HCT116 (cell line): ENCODE measurements at regions of chr7 and their contacts with region 1.

Region 1: GRCh38 chr7:143214789-143215679 is 6.8 kb upstream of the TAS2R40 start:
- DNase-seq: peak; percentile 87
- ATAC-seq: peak; percentile 98
- H3K4me3 ChIP-seq: no peak overlapping the region
- H3K27ac ChIP-seq: no peak overlapping the region
- H3K4me1 ChIP-seq: no peaks in the 10 kb centered on the region
- H3K27me3 ChIP-seq: no peaks in the 10 kb centered on the region
- CTCF ChIP-seq: peak; percentile 95 to 100 (median 100)
- POLR2A ChIP-seq: no peak
- RAD21 ChIP-seq: peak; percentile 100

Region 2: GRCh38 chr7:142603870-142604448 is 611.1 kb before region 1 on chr7:
- CTCF ChIA-PET with region 1: interaction called, 6 read pairs
- POLR2A ChIA-PET with region 1: no interaction called
- RAD21 ChIA-PET with region 1: no interaction called
- intact Hi-C with region 1: loop called (anchors 1 kb)
- DNase-seq: peak; percentile 53
- ATAC-seq: peak; percentile 81
- H3K4me3 ChIP-seq: no peak overlapping the region; a peak in 2 of 4 replicates
- H3K27ac ChIP-seq: no peak overlapping the region
- H3K4me1 ChIP-seq: peaks cover 0 to 7% of the 10 kb centered on the region in 2 experiments; a peak in 1 of 4 replicates
- H3K27me3 ChIP-seq: no peaks in the 10 kb centered on the region
- CTCF ChIP-seq: peak; percentile 78 to 92 (median 90)
- POLR2A ChIP-seq: no peak
- RAD21 ChIP-seq: peak; percentile 86

Region 3: DNA sequence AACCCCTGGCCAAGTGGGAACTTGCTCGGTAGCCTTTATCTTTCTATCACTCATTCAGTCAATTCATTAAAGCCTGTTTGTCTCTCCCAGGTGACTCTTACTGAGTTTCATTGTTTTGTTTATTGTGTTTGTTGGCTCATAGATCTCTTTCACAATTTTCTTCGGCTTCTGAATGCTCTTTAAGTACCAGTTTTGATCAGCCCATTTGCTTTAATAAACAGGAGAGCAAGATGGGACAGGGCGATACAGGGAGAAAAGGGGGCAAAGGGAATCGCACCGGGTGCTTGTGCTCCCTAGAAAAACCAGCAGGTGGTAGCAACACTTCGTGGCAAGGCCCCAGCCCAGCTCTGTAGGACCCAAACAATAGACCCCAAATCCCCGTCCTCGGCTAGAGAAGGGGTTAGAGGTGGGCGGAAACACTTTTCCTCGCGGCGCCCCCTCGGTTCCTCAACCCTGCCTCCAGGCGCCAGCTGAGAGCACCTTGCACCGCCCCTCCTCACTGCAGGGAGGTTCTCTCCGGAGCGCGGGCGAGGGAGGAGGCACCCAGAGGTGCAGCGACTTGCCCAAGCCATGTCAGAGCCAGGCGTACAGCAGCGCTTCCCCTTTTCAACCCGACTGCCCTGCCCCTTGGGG is 361.2 kb before region 1 on chr7:
- CTCF ChIA-PET with region 1: interaction called, 3 read pairs
- POLR2A ChIA-PET with region 1: no interaction called
- RAD21 ChIA-PET with region 1: no interaction called
- intact Hi-C with region 1: loop called (anchors 10 kb)
- DNase-seq: peak; percentile 35
- ATAC-seq: peak; percentile 77
- H3K4me3 ChIP-seq: peak overlapping the region; percentile 76
- H3K27ac ChIP-seq: peak overlapping the region; percentile 68; the same call in 1 of the 2 replicates
- H3K4me1 ChIP-seq: peaks cover 8 to 16% of the 10 kb centered on the region in 2 experiments; a peak in 3 of 4 replicates
- H3K27me3 ChIP-seq: no peaks in the 10 kb centered on the region
- CTCF ChIP-seq: peak; percentile 74 to 85 (median 79); a peak in 5 of 6 replicates
- POLR2A ChIP-seq: no peak
- RAD21 ChIP-seq: peak; percentile 84

Region 4: DNA sequence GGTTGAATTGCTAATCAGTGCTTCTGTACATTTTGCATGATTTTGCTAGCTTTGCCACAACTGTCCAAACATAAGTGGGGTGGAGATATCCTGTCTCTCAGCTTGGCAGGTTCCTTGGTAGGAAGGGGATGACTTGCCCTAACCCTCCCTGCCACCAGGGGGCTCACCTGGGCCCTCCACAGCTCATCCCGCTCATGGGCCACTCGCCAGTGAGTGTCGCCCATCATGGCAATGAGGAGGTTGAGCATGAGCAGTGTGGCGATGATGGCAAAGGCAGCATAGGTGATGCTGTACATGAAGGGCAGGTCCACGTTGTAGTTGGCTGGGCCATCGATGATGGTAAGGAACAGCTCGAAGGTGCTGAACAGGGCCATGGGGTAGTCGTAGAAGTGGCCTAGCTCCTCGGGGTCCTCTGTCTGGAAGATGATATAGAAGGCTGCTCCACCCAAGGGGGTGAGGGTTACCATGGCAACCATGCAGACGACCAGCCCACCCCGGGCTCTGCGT is 341.7 kb before region 1 on chr7:
- CTCF ChIA-PET with region 1: interaction called, 15 read pairs
- POLR2A ChIA-PET with region 1: no interaction called
- RAD21 ChIA-PET with region 1: interaction called in 1 of 2 experiments, 3 read pairs
- intact Hi-C with region 1: no loop called
- DNase-seq: peak; percentile 28
- ATAC-seq: peak; percentile 94
- H3K4me3 ChIP-seq: no peak overlapping the region
- H3K27ac ChIP-seq: no peak overlapping the region
- H3K4me1 ChIP-seq: no peaks in the 10 kb centered on the region
- H3K27me3 ChIP-seq: no peaks in the 10 kb centered on the region
- CTCF ChIP-seq: peak; percentile 76 to 93 (median 90)
- POLR2A ChIP-seq: no peak
- RAD21 ChIP-seq: peak; percentile 40; the same call in 1 of the 2 replicates

Region 5: GRCh38 chr7:142880876-142881505 is 334.0 kb before region 1 on chr7:
- CTCF ChIA-PET with region 1: interaction called, 3 read pairs
- POLR2A ChIA-PET with region 1: no interaction called
- RAD21 ChIA-PET with region 1: no interaction called
- intact Hi-C with region 1: loop called (anchors 2 kb)
- DNase-seq: peak; percentile 37
- ATAC-seq: peak; percentile 74
- H3K4me3 ChIP-seq: no peak overlapping the region
- H3K27ac ChIP-seq: no peak overlapping the region
- H3K4me1 ChIP-seq: peaks cover 3 to 9% of the 10 kb centered on the region in 2 experiments; a peak in 3 of 4 replicates
- H3K27me3 ChIP-seq: peaks cover 6% of the 10 kb centered on the region; the same call in 1 of the 2 replicates
- CTCF ChIP-seq: peak; percentile 81 to 92 (median 90)
- POLR2A ChIP-seq: no peak
- RAD21 ChIP-seq: peak; percentile 70

Region 6: DNA sequence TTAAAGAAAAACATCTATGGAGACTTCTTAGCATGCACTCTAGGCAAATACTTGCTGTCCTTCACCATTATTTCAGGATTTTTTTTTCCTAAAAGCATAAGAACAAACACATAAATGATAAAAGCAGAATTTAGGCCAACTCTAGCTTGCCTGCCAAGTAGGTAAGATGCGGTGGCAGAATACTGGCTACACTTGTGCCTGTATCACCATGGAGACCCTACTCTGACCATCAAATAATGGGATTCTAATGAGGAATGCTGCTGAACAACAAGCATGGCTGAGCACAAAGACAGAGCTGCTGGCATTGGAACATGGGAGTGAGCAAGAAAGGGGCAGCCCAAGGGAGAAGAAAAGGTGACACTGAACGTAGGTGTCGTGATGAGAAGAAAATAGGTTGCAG is 11.6 kb before region 1 on chr7:
- CTCF ChIA-PET with region 1: interaction called, 15 read pairs
- POLR2A ChIA-PET with region 1: no interaction called
- RAD21 ChIA-PET with region 1: no interaction called
- intact Hi-C with region 1: no loop called
- DNase-seq: no peak
- ATAC-seq: no peak
- H3K4me3 ChIP-seq: no peak overlapping the region
- H3K27ac ChIP-seq: no peak overlapping the region
- H3K4me1 ChIP-seq: no peaks in the 10 kb centered on the region
- H3K27me3 ChIP-seq: no peaks in the 10 kb centered on the region
- CTCF ChIP-seq: no peak
- POLR2A ChIP-seq: no peak
- RAD21 ChIP-seq: no peak

Region 7: DNA sequence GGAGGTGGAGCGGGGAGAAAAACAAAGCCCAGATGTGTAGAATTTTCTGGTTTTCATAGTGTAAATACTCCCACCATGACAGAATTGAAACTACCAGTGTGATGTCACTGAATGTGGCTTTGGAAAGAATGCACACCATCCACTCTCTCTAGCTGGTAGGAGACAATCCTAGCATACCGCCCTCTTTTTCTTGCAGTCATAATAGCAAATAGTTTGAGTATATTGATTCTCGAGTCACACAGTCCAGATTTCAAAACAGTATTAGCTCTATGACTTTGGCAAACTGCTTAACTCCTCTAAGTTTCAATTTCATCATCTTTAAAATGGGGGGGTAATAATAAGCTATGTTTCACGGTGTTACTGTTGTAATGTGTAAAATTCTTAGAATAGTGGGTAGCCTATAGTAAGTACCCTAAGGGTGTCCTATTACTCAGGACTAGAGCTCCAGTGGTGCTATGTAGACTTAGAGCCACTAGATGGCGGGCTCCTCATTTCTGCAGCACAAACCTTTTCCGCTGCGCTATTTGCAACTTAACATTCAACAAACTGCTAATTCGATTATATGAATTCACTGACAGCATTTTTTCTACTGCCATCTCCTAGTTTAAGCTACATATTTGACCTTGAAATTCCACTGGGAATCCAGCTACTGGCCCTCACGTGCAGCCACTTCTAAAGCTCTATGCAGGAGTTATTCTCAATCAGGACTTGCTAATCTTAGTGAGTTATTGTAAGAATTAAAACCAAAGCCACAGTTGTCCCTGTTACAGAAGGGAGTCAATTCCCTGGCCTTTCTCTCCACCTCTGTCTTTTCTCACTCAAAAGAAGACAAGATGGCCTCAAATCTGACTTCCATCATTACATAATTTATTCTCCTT is 25.5 kb after region 1 on chr7:
- CTCF ChIA-PET with region 1: interaction called, 23 read pairs
- POLR2A ChIA-PET with region 1: no interaction called
- RAD21 ChIA-PET with region 1: interaction called in 1 of 2 experiments, 4 read pairs
- intact Hi-C with region 1: no loop called
- DNase-seq: peak; percentile 70
- ATAC-seq: peak; percentile 97
- H3K4me3 ChIP-seq: no peak overlapping the region
- H3K27ac ChIP-seq: no peak overlapping the region
- H3K4me1 ChIP-seq: peaks cover 3 to 9% of the 10 kb centered on the region in 2 experiments; a peak in 3 of 4 replicates
- H3K27me3 ChIP-seq: no peaks in the 10 kb centered on the region
- CTCF ChIP-seq: peak; percentile 86 to 97 (median 93)
- POLR2A ChIP-seq: no peak
- RAD21 ChIP-seq: peak; percentile 95